IMR-90 (cell line): ENCODE measurements at regions of chr5 and their contacts with region 1.

Region 1: DNA sequence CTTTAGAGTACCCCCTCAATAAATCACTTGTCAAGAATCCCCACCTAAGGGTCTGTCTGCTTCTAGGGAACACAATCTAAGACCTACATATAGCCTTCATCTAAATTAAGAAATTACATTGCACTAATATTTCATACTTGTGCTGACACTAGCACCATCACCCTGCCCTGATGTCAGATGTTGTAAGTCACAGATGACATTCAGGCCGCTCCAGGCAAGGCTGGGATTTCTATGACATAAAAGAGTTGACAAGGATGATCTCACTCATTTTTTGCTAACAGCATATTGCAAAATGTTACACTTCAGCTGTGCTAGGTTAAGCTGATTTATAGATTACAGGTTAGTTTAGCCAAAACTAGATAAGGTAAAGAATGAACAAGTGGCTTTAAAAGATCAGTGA is 372.5 kb upstream of the GRIA1 start:
- DNase-seq: no peak
- ATAC-seq: no peak
- H3K4me3 ChIP-seq: no peak overlapping the region
- H3K27ac ChIP-seq: no peak overlapping the region
- H3K4me1 ChIP-seq: no peaks in the 10 kb centered on the region
- H3K27me3 ChIP-seq: no peaks in the 10 kb centered on the region
- CTCF ChIP-seq: no peak
- POLR2A ChIP-seq: no peak
- RAD21 ChIP-seq: no peak

Region 2: GRCh38 chr5:152933056-152933455 is 185.0 kb before region 1 on chr5:
- CTCF ChIA-PET with region 1: no interaction called
- POLR2A ChIA-PET with region 1: no interaction called
- dilution Hi-C with region 1: no loop called
- in situ Hi-C with region 1: no loop called
- intact Hi-C with region 1: loop called (anchors 10 kb)
- DNase-seq: no peak
- ATAC-seq: no peak
- H3K4me3 ChIP-seq: no peak overlapping the region
- H3K27ac ChIP-seq: no peak overlapping the region
- H3K4me1 ChIP-seq: no peaks in the 10 kb centered on the region
- H3K27me3 ChIP-seq: no peaks in the 10 kb centered on the region
- CTCF ChIP-seq: no peak
- POLR2A ChIP-seq: no peak
- RAD21 ChIP-seq: no peak